IMR-90 (cell line): ENCODE measurements at regions of chr19 and their contacts with region 1.

Region 1: GRCh38 chr19:38374429-38375176 is at the start of gene PSMD8:
- DNase-seq: peak; percentile 97
- ATAC-seq: peak; percentile 99
- H3K4me3 ChIP-seq: peak within 1 kb of the TSS; percentile 59
- H3K27ac ChIP-seq: peak within 1 kb of the TSS; percentile 86
- H3K4me1 ChIP-seq: peaks cover 12% of the 10 kb centered on the region
- H3K27me3 ChIP-seq: peaks cover 5% of the 10 kb centered on the region; the same call in 1 of the 2 replicates
- CTCF ChIP-seq: peak; percentile 41
- POLR2A ChIP-seq: peak; percentile 98
- RAD21 ChIP-seq: 0 out of 2 replicates have a peak, but pooled peaks have one; percentile 6
- total RNA-seq, gene PSMD8: 502 and 644 TPM in 2 replicates

Region 2: DNA sequence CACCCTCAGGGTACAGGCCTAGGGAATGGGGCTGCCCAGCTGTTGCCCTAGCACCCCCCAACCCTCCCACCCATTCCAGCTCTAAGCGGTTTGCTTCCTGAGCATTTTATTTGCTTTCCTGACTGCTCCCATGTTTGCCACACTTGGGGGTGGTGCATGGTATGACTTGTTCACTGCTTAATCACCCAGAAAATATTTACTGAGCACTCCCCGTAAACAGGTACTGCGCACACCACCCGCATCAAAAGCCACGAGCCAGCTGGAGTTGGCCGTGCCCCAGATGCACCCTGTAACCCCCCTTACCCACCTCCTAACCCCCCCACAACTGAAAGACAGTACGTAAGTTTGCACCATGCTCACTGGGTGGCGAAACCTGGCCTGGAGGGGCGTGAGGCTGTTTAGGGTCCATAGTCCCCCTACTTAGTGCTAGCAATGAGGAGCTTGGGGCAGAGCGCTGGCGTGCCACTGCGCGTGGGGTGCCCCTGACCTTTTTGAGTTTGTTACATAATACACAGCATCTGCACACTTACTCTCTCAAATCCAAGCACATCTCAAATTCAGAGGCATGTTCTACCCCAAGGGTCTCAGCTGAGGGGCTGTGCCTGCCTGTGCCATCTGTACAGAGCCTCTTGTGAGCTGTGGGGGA is 180.4 kb before region 1 on chr19:
- CTCF ChIA-PET with region 1: no interaction called
- POLR2A ChIA-PET with region 1: no interaction called
- dilution Hi-C with region 1: no loop called
- in situ Hi-C with region 1: no loop called
- intact Hi-C with region 1: no loop called
- DNase-seq: no peak
- ATAC-seq: no peak
- H3K4me3 ChIP-seq: no peak overlapping the region
- H3K27ac ChIP-seq: no peak overlapping the region
- H3K4me1 ChIP-seq: no peaks in the 10 kb centered on the region
- H3K27me3 ChIP-seq: no peaks in the 10 kb centered on the region
- CTCF ChIP-seq: no peak
- POLR2A ChIP-seq: no peak
- RAD21 ChIP-seq: no peak

Region 3: DNA sequence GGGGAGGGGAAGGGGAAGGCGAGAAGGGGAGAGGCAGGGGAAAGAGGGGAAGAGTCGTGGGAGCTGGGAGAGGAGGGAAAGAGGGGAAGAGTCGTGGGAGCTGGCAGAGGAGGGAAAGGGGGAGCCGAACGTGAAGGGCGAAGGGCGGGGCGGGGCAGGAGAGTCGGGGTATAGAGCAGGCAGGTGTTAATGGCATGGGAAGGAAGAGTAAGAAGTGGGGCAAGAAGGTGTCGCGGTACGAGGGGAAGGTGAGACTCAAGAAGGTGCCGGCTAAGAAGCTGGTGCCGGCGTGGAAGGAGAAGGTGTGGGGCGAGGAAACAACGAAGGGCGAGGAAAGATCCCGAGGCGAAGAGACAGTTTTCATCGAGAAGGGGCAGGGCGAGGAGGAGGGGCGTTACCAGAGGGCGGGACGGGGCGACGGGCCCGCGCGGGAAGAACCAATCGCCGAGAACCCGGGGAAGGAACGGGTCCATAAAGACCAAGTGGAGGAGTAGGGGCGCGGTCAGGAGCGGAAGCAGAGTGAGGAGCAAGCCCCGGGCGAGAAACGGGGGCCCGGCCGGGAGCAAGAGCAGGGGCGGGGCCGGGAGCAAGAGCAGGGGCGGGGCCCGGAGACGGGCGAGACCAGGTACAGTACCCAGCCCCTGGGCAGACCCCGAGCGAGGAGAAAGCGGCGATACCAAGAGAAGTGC is 38.5 kb before region 1 on chr19:
- CTCF ChIA-PET with region 1: interaction called, 7 read pairs
- POLR2A ChIA-PET with region 1: no interaction called
- dilution Hi-C with region 1: no loop called
- in situ Hi-C with region 1: no loop called
- intact Hi-C with region 1: loop called (anchors 2 kb)
- DNase-seq: peak; percentile 92
- ATAC-seq: peak; percentile 88
- H3K4me3 ChIP-seq: peak overlapping the region; percentile 77
- H3K27ac ChIP-seq: peak overlapping the region; percentile 55
- H3K4me1 ChIP-seq: no peaks in the 10 kb centered on the region
- H3K27me3 ChIP-seq: no peaks in the 10 kb centered on the region
- CTCF ChIP-seq: no peak
- POLR2A ChIP-seq: no peak; the same call in 1 of the 2 replicates
- RAD21 ChIP-seq: no peak

Region 4: GRCh38 chr19:38387550-38388348 is 13.1 kb after region 1 on chr19 and contains the start of gene GGN:
- CTCF ChIA-PET with region 1: interaction called, 5 read pairs
- POLR2A ChIA-PET with region 1: interaction called, 12 read pairs
- dilution Hi-C with region 1: no loop called
- in situ Hi-C with region 1: no loop called
- intact Hi-C with region 1: loop called (anchors 2 kb)
- DNase-seq: peak; percentile 93
- ATAC-seq: peak; percentile 81
- H3K4me3 ChIP-seq: peak within 1 kb of the TSS; percentile 67
- H3K27ac ChIP-seq: peak within 1 kb of the TSS; percentile 90
- H3K4me1 ChIP-seq: peaks cover 2% of the 10 kb centered on the region
- H3K27me3 ChIP-seq: no peaks in the 10 kb centered on the region
- CTCF ChIP-seq: no peak
- POLR2A ChIP-seq: peak; percentile 34; the same call in 1 of the 2 replicates
- RAD21 ChIP-seq: no peak
- total RNA-seq, gene GGN: under 0.01 TPM in 1 of 2 replicates, not detected in the other

Region 5: DNA sequence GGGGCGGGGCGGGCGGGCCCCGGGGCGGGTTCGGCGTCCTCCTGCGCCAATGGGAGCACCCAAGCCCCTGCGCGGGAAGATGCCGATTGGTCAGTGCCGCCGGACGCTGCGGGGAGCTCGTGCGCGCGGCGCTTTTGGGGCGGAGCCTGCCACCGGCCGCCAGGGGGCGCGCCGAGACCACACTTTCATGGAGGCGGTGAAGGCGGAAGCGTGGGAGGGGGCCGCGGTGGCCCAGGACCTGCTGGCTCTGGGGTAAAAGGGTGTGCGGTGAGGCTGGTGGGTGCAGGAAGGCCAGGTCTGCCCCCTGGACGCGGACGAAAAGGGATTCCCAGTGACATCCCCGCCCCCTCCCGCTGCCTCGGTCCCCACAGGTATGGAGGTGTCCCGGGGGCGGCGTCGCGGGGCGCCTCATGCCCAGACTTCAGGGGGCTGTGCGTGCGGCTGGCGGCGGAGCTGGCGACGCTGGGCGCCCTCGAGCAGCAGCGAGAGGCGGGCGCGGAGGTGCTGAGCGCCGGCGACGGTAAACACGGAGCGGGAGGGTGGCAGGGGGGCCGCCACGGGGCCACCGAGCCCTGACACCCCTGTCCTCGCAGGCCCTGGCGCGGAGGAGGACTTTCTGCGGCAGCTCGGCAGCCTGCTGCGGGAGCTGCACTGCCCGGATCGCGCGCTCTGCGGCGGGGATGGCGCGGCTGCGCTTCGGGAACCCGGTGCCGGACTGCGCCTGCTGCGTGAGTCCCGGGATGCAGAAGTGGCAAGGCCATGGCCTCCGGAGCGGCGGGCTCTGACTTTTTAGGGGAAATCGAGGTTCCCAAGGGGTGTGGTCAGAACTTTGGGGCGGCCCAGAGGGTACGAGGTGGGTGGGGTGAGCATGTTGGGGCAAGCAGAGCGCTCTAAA is 28.6 kb after region 1 on chr19 and contains the start of gene FAM98C:
- CTCF ChIA-PET with region 1: interaction called, 10 read pairs
- POLR2A ChIA-PET with region 1: interaction called, 3 read pairs
- dilution Hi-C with region 1: no loop called
- in situ Hi-C with region 1: no loop called
- intact Hi-C with region 1: no loop called
- DNase-seq: peak; percentile 92
- ATAC-seq: peak; percentile 98
- H3K4me3 ChIP-seq: peak within 1 kb of the TSS; percentile 79
- H3K27ac ChIP-seq: peak within 1 kb of the TSS; percentile 69
- H3K4me1 ChIP-seq: no peaks in the 10 kb centered on the region
- H3K27me3 ChIP-seq: no peaks in the 10 kb centered on the region
- CTCF ChIP-seq: peak; percentile 98
- POLR2A ChIP-seq: peak; percentile 53; the same call in 1 of the 2 replicates
- RAD21 ChIP-seq: peak; percentile 78
- total RNA-seq, gene FAM98C: 3.6 and 4.2 TPM in 2 replicates